Left ventricle myocardium inferior (tissue), 1 donor: ENCODE measurements at regions of chr12 and their contacts with region 1.

Region 1: DNA sequence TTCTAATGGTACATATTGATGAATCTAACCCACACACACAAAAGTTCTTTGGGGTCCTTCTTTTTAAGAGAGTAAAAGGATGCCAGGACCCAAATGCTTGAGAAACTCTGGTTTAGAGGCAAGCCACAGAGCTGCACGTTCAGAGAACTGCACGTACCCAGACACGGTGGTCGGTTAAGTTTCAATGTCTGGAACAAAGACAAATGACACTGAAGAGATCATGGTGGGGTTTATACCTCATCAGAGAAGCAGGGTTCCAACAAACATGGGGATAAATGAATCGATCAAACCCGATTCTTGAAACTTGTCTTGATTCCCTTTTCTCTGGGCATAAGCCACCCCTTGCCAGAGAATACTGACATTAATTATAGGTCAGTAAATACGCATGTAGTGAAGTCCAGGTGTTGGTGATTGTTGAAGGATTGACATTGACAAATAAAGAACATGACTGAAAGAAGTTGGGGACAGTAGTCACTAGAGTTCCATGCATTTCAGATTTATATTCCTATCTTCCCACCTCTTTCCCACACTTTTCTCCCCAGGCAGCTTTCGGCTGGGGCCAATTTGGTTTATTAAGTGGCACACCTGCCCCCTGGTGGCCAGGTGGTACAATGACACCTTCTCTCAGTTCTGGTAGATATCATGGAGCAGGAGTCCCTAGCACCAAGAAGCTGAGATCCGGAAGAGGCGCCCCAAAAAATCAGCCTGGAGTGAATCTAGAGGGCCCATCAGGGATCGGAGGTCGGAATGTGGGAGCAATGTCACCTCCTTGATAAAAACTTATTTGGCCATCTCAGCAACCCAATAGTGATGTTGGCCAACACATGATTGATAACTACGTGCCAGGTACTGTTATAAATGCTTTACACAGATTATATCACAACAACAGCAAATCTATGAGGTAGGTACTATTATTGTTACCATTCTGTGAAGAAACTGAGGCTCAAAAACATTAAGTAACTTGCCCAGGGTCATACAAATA is 17.8 kb upstream of the HDAC7 start:
- DNase-seq: peak; percentile 75
- H3K4me3 ChIP-seq: no peak overlapping the region
- H3K27ac ChIP-seq: no peak overlapping the region
- H3K4me1 ChIP-seq: peaks cover 13% of the 10 kb centered on the region
- H3K27me3 ChIP-seq: no peaks in the 10 kb centered on the region
- CTCF ChIP-seq: peak; percentile 92

Region 2: GRCh38 chr12:47715393-47715876 is 122.0 kb before region 1 on chr12:
- intact Hi-C with region 1: loop called (anchors 5 kb)
- DNase-seq: peak; percentile 74
- H3K4me3 ChIP-seq: no peak overlapping the region
- H3K27ac ChIP-seq: peak overlapping the region; percentile 95
- H3K4me1 ChIP-seq: peaks cover 48% of the 10 kb centered on the region
- H3K27me3 ChIP-seq: no peaks in the 10 kb centered on the region
- CTCF ChIP-seq: peak; percentile 83

Region 3: DNA sequence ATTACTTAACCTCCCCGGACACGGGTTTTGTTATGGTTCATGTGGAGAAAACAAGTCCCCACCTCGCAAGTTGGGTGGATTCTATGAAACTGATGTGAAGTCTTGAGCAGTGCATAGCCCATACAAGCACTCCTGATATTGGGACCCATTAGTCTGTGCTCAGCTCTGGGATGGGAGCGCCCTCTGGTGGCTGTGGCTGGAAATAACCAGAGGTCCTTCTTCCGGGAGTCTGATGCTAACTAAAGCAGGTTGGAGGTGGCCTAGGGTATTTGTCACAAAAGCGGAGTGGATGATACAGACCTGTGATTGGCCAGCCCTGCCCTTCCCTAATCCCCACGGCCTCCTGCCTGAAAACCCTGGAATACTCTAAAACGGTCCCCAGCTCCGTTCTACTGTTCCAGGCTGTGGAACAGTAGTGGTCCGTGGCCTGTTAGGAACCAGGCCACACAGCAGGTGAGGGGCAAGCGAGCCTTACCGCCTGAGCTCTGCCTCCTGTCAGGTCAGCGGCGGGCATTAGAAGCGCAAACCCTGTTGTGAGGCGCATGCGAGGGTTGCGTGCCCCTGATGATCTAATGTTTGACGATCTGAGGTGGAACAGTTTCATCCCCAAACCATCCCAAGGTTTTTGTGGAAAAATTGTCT is 58.1 kb before region 1 on chr12:
- intact Hi-C with region 1: loop called (anchors 10 kb)
- DNase-seq: peak; percentile 88
- H3K4me3 ChIP-seq: no peak overlapping the region
- H3K27ac ChIP-seq: peak overlapping the region; percentile 71
- H3K4me1 ChIP-seq: peaks cover 73% of the 10 kb centered on the region
- H3K27me3 ChIP-seq: no peaks in the 10 kb centered on the region
- CTCF ChIP-seq: peak; percentile 94

Region 4: GRCh38 chr12:47802324-47802735 is 35.2 kb before region 1 on chr12:
- intact Hi-C with region 1: loop called (anchors 5 kb)
- DNase-seq: no peak
- H3K4me3 ChIP-seq: peak overlapping the region; percentile 24
- H3K27ac ChIP-seq: peak overlapping the region; percentile 99
- H3K4me1 ChIP-seq: peaks cover 95% of the 10 kb centered on the region
- H3K27me3 ChIP-seq: no peaks in the 10 kb centered on the region
- CTCF ChIP-seq: peak; percentile 22

Region 5: DNA sequence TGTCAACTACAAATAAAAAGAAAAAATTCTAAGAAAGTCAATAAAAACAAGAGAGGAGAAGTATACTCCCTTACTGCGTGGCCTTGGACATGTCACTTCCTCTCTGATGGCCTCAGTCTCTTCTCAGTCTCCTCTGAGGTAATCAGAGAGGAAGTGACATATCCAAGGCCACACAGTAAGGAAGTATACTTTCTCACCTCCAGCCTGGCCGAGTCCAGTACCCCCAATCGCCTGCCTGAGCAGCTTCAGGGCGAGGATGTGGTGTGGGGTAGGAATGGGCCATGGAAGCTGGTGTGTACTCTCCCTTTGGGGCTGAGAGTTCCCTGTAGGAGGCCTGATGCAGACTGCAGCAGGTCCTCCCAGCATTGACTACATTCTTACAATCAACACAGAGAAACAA is 51.6 kb after region 1 on chr12:
- intact Hi-C with region 1: no loop called
- DNase-seq: no peak
- H3K4me3 ChIP-seq: no peak overlapping the region
- H3K27ac ChIP-seq: no peak overlapping the region
- H3K4me1 ChIP-seq: no peaks in the 10 kb centered on the region
- H3K27me3 ChIP-seq: peaks cover 10% of the 10 kb centered on the region
- CTCF ChIP-seq: no peak